Natural killer cell (primary cell): ENCODE measurements at regions of chr17 and their contacts with region 1.

Region 1: DNA sequence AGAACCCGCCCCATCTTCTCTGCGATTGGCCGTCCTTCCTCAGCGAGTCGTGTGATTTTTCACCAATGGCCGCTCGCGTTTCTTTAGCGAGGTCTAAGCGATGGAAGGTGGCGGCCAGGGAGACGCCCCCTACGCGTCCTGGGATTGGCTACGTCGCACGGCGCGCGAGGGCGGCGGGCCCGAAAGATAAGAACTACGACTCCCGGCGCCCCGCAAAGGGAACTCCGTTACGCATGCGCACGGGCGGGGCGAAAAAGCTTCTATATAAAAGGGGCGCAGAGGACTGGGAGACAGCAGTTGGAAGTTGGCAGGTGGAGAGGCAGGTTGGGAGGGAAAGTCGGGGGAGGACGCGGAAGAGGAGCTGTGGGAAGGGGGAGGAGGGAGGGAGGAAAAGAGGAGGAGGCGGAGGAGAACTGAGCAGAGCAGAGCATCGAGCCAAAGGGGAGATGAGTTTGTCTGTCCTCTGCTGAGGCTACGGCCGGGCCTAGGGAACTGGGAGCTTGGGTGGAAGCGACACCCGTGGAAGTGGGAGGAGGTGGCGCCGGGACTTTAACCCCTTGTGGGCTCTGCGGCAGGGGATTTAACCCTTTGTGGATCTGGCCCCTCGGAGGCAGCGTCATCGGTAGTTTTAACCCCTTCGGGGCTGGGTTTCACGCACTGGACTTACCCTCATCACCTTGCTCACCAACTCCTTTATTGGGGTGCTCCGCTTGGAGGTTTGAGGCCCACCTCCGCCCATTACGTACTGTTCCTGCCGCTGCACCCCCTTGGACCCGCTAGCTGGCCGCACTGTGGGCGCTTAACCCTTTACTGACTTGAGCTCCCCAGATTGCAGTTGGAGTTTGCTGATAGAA is at the start of gene HEXIM1:
- DNase-seq: peak; percentile 99
- ATAC-seq: peak; percentile 77 to 92 (median 82)
- H3K4me3 ChIP-seq: peak within 1 kb of the TSS; percentile 88
- H3K4me3 Mint-ChIP-seq: peak within 1 kb of the TSS; percentile 100
- H3K27ac ChIP-seq: peak within 1 kb of the TSS; percentile 98
- H3K27ac Mint-ChIP-seq: peak within 1 kb of the TSS; percentile 98 to 100
- H3K4me1 ChIP-seq: peaks cover 52% of the 10 kb centered on the region
- H3K4me1 Mint-ChIP-seq: peaks cover 51 to 65% of the 10 kb centered on the region in 2 donors
- H3K27me3 ChIP-seq: no peaks in the 10 kb centered on the region
- H3K27me3 Mint-ChIP-seq: no peaks in the 10 kb centered on the region
- CTCF ChIP-seq: no peak
- total RNA-seq, gene HEXIM1: 64.9 to 80.7 (median 79.8) TPM

Region 2: GRCh38 chr17:45060797-45061605 is 87.4 kb before region 1 on chr17 and contains the start of gene NMT1:
- intact Hi-C with region 1: loop called (anchors 1 kb)
- DNase-seq: peak; percentile 90 to 98
- ATAC-seq: peak; percentile 89 to 97 (median 89)
- H3K4me3 ChIP-seq: peak within 1 kb of the TSS; percentile 87
- H3K4me3 Mint-ChIP-seq: peak within 1 kb of the TSS; percentile 91
- H3K27ac ChIP-seq: peak within 1 kb of the TSS; percentile 84
- H3K27ac Mint-ChIP-seq: peak within 1 kb of the TSS; percentile 90 to 100
- H3K4me1 ChIP-seq: peaks cover 20% of the 10 kb centered on the region
- H3K4me1 Mint-ChIP-seq: peaks cover 26 to 31% of the 10 kb centered on the region in 2 donors
- H3K27me3 ChIP-seq: no peaks in the 10 kb centered on the region
- H3K27me3 Mint-ChIP-seq: no peaks in the 10 kb centered on the region
- CTCF ChIP-seq: no peak
- total RNA-seq, gene NMT1: 56.6 to 94.7 (median 77.6) TPM

Region 3: DNA sequence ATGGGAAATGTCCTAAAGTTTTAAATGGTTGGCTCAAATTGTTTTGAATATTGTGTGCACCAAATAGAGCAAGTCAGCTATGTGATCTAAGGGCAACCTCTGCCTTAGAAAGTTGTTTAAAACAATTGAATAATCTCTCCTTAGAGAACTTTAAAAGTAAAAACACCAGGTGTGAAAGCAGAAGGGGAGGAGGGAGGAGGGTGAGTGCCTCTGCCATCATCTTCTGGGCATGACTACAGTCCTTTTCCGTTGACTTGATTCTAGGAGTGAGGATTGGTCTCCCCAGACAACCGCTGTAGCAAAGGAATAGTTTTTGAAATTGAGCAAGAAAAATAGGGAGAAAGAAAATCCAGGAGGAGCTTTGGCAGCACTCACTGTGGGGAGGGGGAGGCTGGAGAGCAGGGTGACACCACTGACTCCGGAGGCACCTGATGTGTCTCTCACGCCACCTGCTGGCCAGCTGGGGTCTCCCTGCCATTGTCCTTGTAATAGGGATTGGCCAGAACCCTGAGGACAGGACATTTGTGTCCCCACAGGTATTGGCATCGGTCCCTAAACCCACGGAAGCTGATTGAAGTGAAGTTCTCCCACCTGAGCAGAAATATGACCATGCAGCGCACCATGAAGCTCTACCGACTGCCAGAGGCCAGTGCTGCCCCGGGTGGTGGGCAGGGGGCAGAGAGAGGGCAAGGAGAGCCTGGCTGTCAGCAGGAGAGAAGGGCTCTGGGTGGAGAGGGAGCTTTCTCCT is 49.4 kb before region 1 on chr17:
- intact Hi-C with region 1: no loop called
- DNase-seq: peak; percentile 67 to 82
- ATAC-seq: peak; percentile 86 to 97 (median 91)
- H3K4me3 ChIP-seq: no peak overlapping the region
- H3K4me3 Mint-ChIP-seq: no peak overlapping the region
- H3K27ac ChIP-seq: no peak overlapping the region
- H3K27ac Mint-ChIP-seq: peak overlapping the region in 1 of 2 donors; percentile 64
- H3K4me1 ChIP-seq: no peaks in the 10 kb centered on the region
- H3K4me1 Mint-ChIP-seq: peaks cover 0 to 6% of the 10 kb centered on the region in 2 donors
- H3K27me3 ChIP-seq: no peaks in the 10 kb centered on the region
- H3K27me3 Mint-ChIP-seq: no peaks in the 10 kb centered on the region
- CTCF ChIP-seq: peak; percentile 82

Region 4: DNA sequence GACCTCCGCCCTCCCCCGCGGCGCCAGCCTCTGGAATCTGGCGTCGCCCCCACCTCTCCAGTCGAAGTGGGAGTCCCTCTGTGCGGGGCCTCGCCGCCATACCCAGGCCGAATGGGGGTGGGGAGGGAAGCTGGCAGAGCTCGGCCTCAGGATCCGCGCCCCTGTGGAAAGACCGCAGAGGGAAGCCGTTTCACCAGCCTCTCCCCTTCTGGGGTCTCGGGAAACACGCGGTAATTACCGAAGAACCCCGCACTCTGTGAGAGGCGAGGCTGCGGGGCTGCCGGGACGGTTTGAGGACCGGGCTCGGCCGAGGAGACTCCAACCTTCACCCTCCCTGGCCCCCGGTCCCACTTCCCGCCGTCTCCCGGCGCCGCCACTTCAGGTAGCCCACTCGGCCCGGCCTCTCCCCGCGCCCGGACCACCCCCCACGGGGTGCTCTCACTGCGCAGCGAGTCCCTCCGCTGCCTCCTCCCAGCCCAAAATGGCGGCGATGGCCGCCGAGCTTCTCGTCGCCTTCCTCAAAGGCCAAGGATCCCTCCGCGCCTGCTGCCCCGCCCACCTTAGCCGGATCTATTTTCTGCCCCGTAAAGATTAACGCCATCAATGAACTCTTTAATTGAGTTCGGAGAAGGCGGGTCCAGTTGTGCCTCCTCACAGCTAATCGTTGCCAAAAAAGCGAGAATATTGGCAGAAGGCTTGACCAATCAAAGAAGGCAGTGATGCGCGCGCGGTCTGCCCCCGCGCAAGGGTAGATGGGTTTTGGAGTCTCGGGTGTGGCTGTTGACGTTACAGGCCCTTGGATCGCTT is 12.8 kb after region 1 on chr17:
- intact Hi-C with region 1: loop called (anchors 1 kb)
- DNase-seq: peak; percentile 97 to 99
- ATAC-seq: peak; percentile 91 to 97 (median 93)
- H3K4me3 ChIP-seq: peak overlapping the region; percentile 99
- H3K4me3 Mint-ChIP-seq: peak overlapping the region; percentile 95
- H3K27ac ChIP-seq: peak overlapping the region; percentile 100
- H3K27ac Mint-ChIP-seq: peak overlapping the region; percentile 93 to 94
- H3K4me1 ChIP-seq: peaks cover 22% of the 10 kb centered on the region
- H3K4me1 Mint-ChIP-seq: peaks cover 33 to 46% of the 10 kb centered on the region in 2 donors
- H3K27me3 ChIP-seq: no peaks in the 10 kb centered on the region
- H3K27me3 Mint-ChIP-seq: no peaks in the 10 kb centered on the region
- CTCF ChIP-seq: no peak

Region 5: GRCh38 chr17:45277216-45277849 is 128.9 kb after region 1 on chr17:
- intact Hi-C with region 1: no loop called
- DNase-seq: peak; percentile 86 to 95
- ATAC-seq: peak; percentile 93 to 99 (median 99)
- H3K4me3 ChIP-seq: no peak overlapping the region
- H3K4me3 Mint-ChIP-seq: no peak overlapping the region
- H3K27ac ChIP-seq: no peak overlapping the region
- H3K27ac Mint-ChIP-seq: peak overlapping the region in 1 of 2 donors; percentile 66
- H3K4me1 ChIP-seq: no peaks in the 10 kb centered on the region
- H3K4me1 Mint-ChIP-seq: peaks cover 0 to 5% of the 10 kb centered on the region in 2 donors
- H3K27me3 ChIP-seq: no peaks in the 10 kb centered on the region
- H3K27me3 Mint-ChIP-seq: no peaks in the 10 kb centered on the region
- CTCF ChIP-seq: peak; percentile 72

Region 6: DNA sequence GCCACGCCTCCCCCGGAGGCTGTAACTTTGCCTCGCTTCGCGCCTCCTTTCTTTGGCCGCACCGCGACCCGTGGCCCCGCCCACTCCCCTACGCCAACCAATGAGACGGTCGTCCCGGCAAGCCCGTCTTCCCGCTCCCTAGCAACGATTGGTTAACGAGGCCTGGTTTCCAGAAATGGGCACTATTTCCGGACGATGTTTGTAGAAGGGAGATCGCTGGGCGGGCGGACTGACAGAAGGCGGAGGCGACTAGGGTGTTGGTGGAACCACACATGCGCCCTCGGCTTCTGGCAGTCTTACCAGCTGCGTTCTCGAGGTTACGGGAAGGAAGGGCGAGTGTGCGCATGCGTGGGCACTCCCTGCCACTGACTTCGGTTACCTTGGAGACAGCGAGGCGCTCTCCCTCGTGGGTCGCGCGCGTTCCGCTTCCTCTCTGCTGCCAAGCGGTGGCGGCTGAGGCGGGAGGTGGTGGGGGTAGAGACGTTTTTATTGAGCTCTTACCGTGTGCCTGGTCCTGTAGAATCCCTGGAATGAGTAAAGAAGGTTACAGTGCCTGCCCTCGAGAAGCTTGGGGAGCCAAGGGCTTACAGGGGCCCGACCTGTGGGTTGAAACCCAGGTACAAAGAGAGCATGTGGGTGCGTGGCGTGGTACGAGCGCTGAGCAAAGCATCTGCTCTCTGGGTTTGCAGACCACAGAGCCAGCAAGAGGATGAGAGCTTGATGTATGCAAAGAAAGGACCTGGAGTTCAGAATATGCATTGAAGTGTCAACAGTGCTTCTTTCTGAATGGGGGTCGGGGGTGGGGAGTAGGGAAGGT is 168.9 kb after region 1 on chr17:
- intact Hi-C with region 1: loop called (anchors 5 kb)
- DNase-seq: peak; percentile 99 to 100
- ATAC-seq: peak; percentile 76 to 93 (median 81)
- H3K4me3 ChIP-seq: peak overlapping the region; percentile 38
- H3K4me3 Mint-ChIP-seq: peak overlapping the region; percentile 92
- H3K27ac ChIP-seq: peak overlapping the region; percentile 65
- H3K27ac Mint-ChIP-seq: peak overlapping the region; percentile 91 to 92
- H3K4me1 ChIP-seq: peaks cover 64% of the 10 kb centered on the region
- H3K4me1 Mint-ChIP-seq: peaks cover 80 to 81% of the 10 kb centered on the region in 2 donors
- H3K27me3 ChIP-seq: no peaks in the 10 kb centered on the region
- H3K27me3 Mint-ChIP-seq: no peaks in the 10 kb centered on the region
- CTCF ChIP-seq: no peak